Pancreas (tissue), 10 donors: ENCODE measurements at regions of chr7 and their contacts with region 1.

Region 1: GRCh38 chr7:90165724-90166123 is 11.5 kb downstream of the STEAP1 start:
- DNase-seq: no peak
- ATAC-seq: no peak
- H3K4me3 ChIP-seq: no peak overlapping the region
- H3K27ac ChIP-seq: no peak overlapping the region
- H3K4me1 ChIP-seq: no peaks in the 10 kb centered on the region
- H3K27me3 ChIP-seq: no peaks in the 10 kb centered on the region
- CTCF ChIP-seq: no peak

Region 2: GRCh38 chr7:90244909-90245851 is 79.5 kb after region 1 on chr7 and contains the start of gene CFAP69:
- intact Hi-C with region 1: loop called in 1 of 3 experiments (anchors 10 kb)
- DNase-seq: peak; percentile 88 to 97 (median 94)
- ATAC-seq: peak; percentile 99
- H3K4me3 ChIP-seq: peak within 1 kb of the TSS; percentile 75 to 98 (median 86)
- H3K27ac ChIP-seq: no peak within 1 kb of the TSS
- H3K4me1 ChIP-seq: peaks cover 0 to 7% (median 0%) of the 10 kb centered on the region in 3 donors
- H3K27me3 ChIP-seq: no peaks in the 10 kb centered on the region
- CTCF ChIP-seq: peak in 1 of 4 donors; percentile 35
- total RNA-seq, gene CFAP69: 2.6 to 5.8 (median 3.8) TPM